ENCODE measurements at regions of chr6 and their contacts with region 1.

Region 1: DNA sequence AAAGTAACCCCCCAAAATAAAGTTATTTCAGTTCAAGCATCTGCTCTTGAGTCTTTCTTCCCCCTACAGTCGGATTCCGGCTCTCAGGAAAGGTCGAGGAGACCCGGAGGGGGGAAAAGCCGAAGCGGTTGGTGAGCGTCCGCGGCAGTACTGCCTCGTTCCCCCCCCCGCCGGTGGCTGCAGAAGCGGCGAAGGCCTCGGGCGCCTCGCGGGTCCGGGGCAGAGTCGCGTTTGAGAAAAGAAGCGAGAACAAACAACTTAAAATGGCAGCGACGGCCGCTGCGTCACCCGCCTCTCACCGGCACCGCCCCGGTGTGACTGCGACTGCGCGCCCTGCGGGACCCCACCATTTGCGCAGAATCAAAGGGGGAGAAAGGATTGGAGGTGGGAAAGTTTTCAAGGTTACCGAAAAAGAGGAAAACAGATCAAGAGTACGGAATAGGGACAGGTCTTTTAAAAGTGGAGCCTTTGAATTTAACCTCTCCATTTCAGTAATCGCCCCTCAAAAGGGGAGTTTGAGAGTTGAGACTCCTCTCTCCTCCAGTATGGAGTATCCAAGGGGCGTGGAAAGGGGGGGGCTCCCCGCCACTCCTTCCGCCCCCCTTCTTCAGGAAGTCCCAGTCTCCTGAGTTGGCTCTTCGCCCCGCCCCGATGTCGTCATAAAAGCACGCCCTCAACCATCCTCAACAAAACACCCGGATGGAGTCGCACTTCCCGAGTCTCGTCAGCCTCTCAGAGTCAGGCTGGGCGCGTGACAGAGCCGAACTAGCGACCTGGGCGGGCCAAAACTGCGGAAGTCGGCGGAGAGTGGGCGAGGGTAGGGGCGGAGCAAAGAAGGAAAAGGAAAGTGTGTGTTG is 1.9 kb upstream of the C6orf62 start:
- DNase-seq: peak; percentile 100
- H3K4me3 Mint-ChIP-seq: peak overlapping the region; percentile 96
- H3K27ac Mint-ChIP-seq: peak overlapping the region; percentile 100
- H3K4me1 Mint-ChIP-seq: peaks cover 36% of the 10 kb centered on the region
- H3K27me3 Mint-ChIP-seq: no peaks in the 10 kb centered on the region

Region 2: GRCh38 chr6:24743265-24743943 is 22.6 kb after region 1 on chr6:
- CTCF ChIA-PET with region 1: interaction called, 5 read pairs
- POLR2A ChIA-PET with region 1: interaction called, 11 read pairs
- DNase-seq: no peak
- H3K4me3 Mint-ChIP-seq: no peak overlapping the region
- H3K27ac Mint-ChIP-seq: no peak overlapping the region
- H3K4me1 Mint-ChIP-seq: peaks cover 17% of the 10 kb centered on the region
- H3K27me3 Mint-ChIP-seq: no peaks in the 10 kb centered on the region

Region 3: GRCh38 chr6:24802271-24803059 is 81.6 kb after region 1 on chr6:
- CTCF ChIA-PET with region 1: no interaction called
- POLR2A ChIA-PET with region 1: no interaction called
- DNase-seq: no peak
- H3K4me3 Mint-ChIP-seq: no peak overlapping the region
- H3K27ac Mint-ChIP-seq: no peak overlapping the region
- H3K4me1 Mint-ChIP-seq: peaks cover 20% of the 10 kb centered on the region
- H3K27me3 Mint-ChIP-seq: no peaks in the 10 kb centered on the region